Activated CD8-positive, alpha-beta T cell treated with anti-CD3 and anti-CD28 coated beads for 36 hours (primary cell): ENCODE measurements at regions of chr16 and their contacts with region 1.

Region 1: GRCh38 chr16:89706507-89707263 is 5.2 kb upstream of the SPATA2L start:
- DNase-seq: no peak
- ATAC-seq: no peak
- H3K4me3 Mint-ChIP-seq: no peak overlapping the region
- H3K27ac Mint-ChIP-seq: no peak overlapping the region
- H3K4me1 Mint-ChIP-seq: peaks cover 11% of the 10 kb centered on the region
- H3K27me3 Mint-ChIP-seq: no peaks in the 10 kb centered on the region
- CTCF ChIP-seq: no peak

Region 2: GRCh38 chr16:89581045-89581690 is 125.5 kb before region 1 on chr16:
- CTCF ChIA-PET with region 1: no interaction called
- POLR2A ChIA-PET with region 1: no interaction called
- intact Hi-C with region 1: no loop called
- DNase-seq: no peak
- ATAC-seq: no peak
- H3K4me3 Mint-ChIP-seq: no peak overlapping the region
- H3K27ac Mint-ChIP-seq: no peak overlapping the region
- H3K4me1 Mint-ChIP-seq: no peaks in the 10 kb centered on the region
- H3K27me3 Mint-ChIP-seq: peaks cover 2% of the 10 kb centered on the region
- CTCF ChIP-seq: no peak

Region 3: GRCh38 chr16:89721546-89722391 is 15.1 kb after region 1 on chr16:
- CTCF ChIA-PET with region 1: interaction called, 20 read pairs
- POLR2A ChIA-PET with region 1: interaction called, 10 read pairs
- intact Hi-C with region 1: no loop called
- DNase-seq: peak; percentile 85
- ATAC-seq: peak; percentile 17
- H3K4me3 Mint-ChIP-seq: peak overlapping the region; percentile 82
- H3K27ac Mint-ChIP-seq: peak overlapping the region; percentile 86
- H3K4me1 Mint-ChIP-seq: peaks cover 44% of the 10 kb centered on the region
- H3K27me3 Mint-ChIP-seq: no peaks in the 10 kb centered on the region
- CTCF ChIP-seq: no peak

Region 4: DNA sequence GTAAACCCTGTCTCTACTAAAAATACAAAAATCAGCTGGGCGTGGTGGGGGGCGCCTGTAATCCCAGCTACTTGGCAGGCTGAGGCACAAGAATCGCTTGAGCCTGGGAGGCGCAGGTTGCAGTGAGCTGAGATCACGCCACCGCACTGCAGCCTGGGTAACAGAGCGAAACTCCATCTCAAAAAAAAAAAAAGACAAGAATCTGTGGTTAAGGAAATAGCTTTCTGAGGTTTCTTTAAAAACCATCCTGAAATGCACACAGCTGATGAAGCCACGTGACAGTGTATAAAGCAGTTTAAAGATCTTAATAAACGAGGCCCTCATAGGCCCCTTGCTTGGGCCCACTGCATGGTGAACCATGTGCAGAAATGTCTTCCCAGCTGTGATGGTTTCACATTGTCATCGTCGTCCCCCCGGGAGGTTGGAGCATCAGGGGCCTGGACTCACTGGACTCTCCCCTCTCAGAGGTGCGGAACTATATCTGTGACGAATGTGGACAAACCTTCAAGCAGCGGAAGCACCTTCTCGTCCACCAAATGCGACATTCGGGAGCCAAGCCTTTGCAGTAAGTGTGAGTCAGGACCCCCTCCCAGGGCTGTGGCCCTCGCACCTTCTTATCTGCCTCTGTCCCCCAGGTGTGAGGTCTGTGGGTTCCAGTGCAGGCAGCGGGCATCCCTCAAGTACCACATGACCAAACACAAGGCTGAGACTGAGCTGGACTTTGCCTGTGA is 30.8 kb after region 1 on chr16:
- CTCF ChIA-PET with region 1: interaction called, 21 read pairs
- POLR2A ChIA-PET with region 1: interaction called, 5 read pairs
- intact Hi-C with region 1: no loop called
- DNase-seq: peak; percentile 68
- ATAC-seq: peak; percentile 58
- H3K4me3 Mint-ChIP-seq: no peak overlapping the region
- H3K27ac Mint-ChIP-seq: peak overlapping the region; percentile 69
- H3K4me1 Mint-ChIP-seq: peaks cover 31% of the 10 kb centered on the region
- H3K27me3 Mint-ChIP-seq: no peaks in the 10 kb centered on the region
- CTCF ChIP-seq: no peak

Region 5: DNA sequence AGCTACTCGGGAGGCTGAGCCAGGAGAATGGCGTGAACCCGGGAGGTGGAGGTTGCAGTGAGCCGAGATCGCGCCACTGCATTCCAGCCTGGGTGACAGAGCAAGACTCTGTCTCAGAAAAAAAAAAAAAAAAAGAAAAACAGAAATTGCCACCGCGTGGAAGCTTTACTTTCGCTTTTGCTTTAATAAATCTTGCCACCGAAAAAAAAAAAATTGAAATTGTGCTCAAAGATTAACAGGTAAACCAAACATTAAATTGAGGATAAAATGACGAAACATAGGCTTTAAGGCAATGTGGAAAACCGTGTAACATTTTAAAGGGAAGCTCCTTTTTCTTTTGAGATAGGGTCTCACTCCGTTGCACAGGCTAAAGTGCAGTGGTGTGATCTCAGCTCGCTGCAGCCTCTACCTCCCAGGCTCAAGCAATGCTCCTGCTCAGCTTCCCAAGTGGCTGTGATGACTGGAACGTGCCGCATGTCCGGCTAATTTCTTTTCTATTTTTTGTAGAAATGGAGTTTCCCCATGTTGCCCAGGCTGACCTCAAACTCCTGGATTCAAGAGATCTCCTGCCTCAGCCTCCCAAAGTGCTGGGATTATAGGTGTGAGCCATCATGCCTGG is 54.7 kb after region 1 on chr16:
- CTCF ChIA-PET with region 1: interaction called, 13 read pairs
- POLR2A ChIA-PET with region 1: no interaction called
- intact Hi-C with region 1: no loop called
- DNase-seq: no peak
- ATAC-seq: no peak
- H3K4me3 Mint-ChIP-seq: peak overlapping the region; percentile 70
- H3K27ac Mint-ChIP-seq: peak overlapping the region; percentile 81
- H3K4me1 Mint-ChIP-seq: peaks cover 30% of the 10 kb centered on the region
- H3K27me3 Mint-ChIP-seq: no peaks in the 10 kb centered on the region
- CTCF ChIP-seq: no peak

Region 6: GRCh38 chr16:89791278-89791995 is 84.8 kb after region 1 on chr16:
- CTCF ChIA-PET with region 1: interaction called, 58 read pairs
- POLR2A ChIA-PET with region 1: interaction called, 3 read pairs
- intact Hi-C with region 1: loop called (anchors 10 kb)
- DNase-seq: no peak
- ATAC-seq: no peak
- H3K4me3 Mint-ChIP-seq: no peak overlapping the region
- H3K27ac Mint-ChIP-seq: no peak overlapping the region
- H3K4me1 Mint-ChIP-seq: peaks cover 12% of the 10 kb centered on the region
- H3K27me3 Mint-ChIP-seq: no peaks in the 10 kb centered on the region
- CTCF ChIP-seq: no peak

Region 7: GRCh38 chr16:89873972-89874689 is 167.4 kb after region 1 on chr16:
- CTCF ChIA-PET with region 1: interaction called, 16 read pairs
- POLR2A ChIA-PET with region 1: interaction called, 11 read pairs
- intact Hi-C with region 1: no loop called
- DNase-seq: peak; percentile 98
- ATAC-seq: peak; percentile 86
- H3K4me3 Mint-ChIP-seq: peak overlapping the region; percentile 81
- H3K27ac Mint-ChIP-seq: peak overlapping the region; percentile 97
- H3K4me1 Mint-ChIP-seq: peaks cover 16% of the 10 kb centered on the region
- H3K27me3 Mint-ChIP-seq: no peaks in the 10 kb centered on the region
- CTCF ChIP-seq: no peak

Region 8: GRCh38 chr16:89909777-89910716 is 203.4 kb after region 1 on chr16:
- CTCF ChIA-PET with region 1: interaction called, 25 read pairs
- POLR2A ChIA-PET with region 1: interaction called, 3 read pairs
- intact Hi-C with region 1: no loop called
- DNase-seq: peak; percentile 77
- ATAC-seq: peak; percentile 88
- H3K4me3 Mint-ChIP-seq: no peak overlapping the region
- H3K27ac Mint-ChIP-seq: no peak overlapping the region
- H3K4me1 Mint-ChIP-seq: peaks cover 4% of the 10 kb centered on the region
- H3K27me3 Mint-ChIP-seq: no peaks in the 10 kb centered on the region
- CTCF ChIP-seq: peak; percentile 91